Mammary epithelial cell (primary cell): ENCODE measurements at regions of chr9 and their contacts with region 1.

Region 1: GRCh38 chr9:121326130-121326838 is 43.8 kb downstream of the STOM start:
- DNase-seq: peak; percentile 23
- H3K4me3 ChIP-seq: no peak overlapping the region
- H3K27ac ChIP-seq: no peak overlapping the region
- H3K4me1 ChIP-seq: peaks cover 27% of the 10 kb centered on the region
- H3K27me3 ChIP-seq: no peaks in the 10 kb centered on the region
- CTCF ChIP-seq: no peak

Region 2: GRCh38 chr9:120730661-120731514 is 595.4 kb before region 1 on chr9:
- CTCF ChIA-PET with region 1: no interaction called
- dilution Hi-C with region 1: no loop called
- in situ Hi-C with region 1: no loop called
- intact Hi-C with region 1: no loop called
- DNase-seq: peak; percentile 66
- H3K4me3 ChIP-seq: no peak overlapping the region
- H3K27ac ChIP-seq: no peak overlapping the region
- H3K4me1 ChIP-seq: no peaks in the 10 kb centered on the region
- H3K27me3 ChIP-seq: no peaks in the 10 kb centered on the region
- CTCF ChIP-seq: no peak

Region 3: GRCh38 chr9:121350993-121351561 is 24.8 kb after region 1 on chr9:
- CTCF ChIA-PET with region 1: no interaction called
- dilution Hi-C with region 1: no loop called
- in situ Hi-C with region 1: no loop called
- intact Hi-C with region 1: loop called (anchors 1 kb)
- DNase-seq: peak; percentile 84
- H3K4me3 ChIP-seq: no peak overlapping the region
- H3K27ac ChIP-seq: peak overlapping the region; percentile 9
- H3K4me1 ChIP-seq: peaks cover 16% of the 10 kb centered on the region
- H3K27me3 ChIP-seq: no peaks in the 10 kb centered on the region
- CTCF ChIP-seq: no peak

Region 4: DNA sequence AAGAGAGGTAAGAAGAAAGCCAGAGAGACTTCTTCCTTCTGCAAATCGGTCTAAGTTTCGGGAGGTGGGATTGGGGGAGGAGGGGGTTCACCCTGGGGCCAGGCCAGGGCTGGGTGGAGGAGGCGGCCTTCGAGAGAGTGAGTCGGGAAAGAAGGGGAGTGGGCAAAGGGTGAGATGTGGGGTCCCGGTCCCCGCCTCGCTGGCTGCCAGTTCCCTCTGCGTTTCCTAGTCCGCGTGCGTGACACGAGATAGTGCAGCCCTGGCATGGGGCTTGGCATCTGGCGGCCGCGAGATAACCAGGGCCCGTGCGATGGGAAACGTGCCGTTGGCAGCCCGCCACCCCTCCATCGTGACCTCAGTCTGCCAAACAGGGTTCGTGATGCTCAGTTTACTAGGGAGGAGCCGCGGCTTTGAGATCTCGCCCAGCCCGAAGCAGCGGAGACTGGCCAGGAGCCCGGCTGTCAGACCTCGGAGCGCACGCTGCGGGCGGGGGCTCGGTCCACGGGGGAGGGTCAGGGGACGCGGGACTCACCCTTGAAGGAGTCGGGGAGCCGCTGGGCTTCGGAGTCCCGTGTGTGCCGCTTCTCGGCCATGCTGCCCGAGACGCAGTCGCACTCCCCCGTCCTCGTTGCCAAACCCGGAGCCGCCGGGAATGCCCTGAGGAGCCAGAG is 43.4 kb after region 1 on chr9 and contains the start of gene STOM:
- CTCF ChIA-PET with region 1: no interaction called
- dilution Hi-C with region 1: no loop called
- in situ Hi-C with region 1: loop called in 1 of 2 experiments (anchors 10 kb)
- intact Hi-C with region 1: loop called (anchors 1 kb)
- DNase-seq: peak; percentile 76
- H3K4me3 ChIP-seq: peak within 1 kb of the TSS; percentile 38 to 73 (median 62)
- H3K27ac ChIP-seq: peak within 1 kb of the TSS; percentile 35
- H3K4me1 ChIP-seq: peaks cover 33% of the 10 kb centered on the region
- H3K27me3 ChIP-seq: no peaks in the 10 kb centered on the region
- CTCF ChIP-seq: no peak
- total RNA-seq, gene STOM: 80.3 to 124 TPM

Region 5: GRCh38 chr9:121376214-121376830 is 50.0 kb after region 1 on chr9:
- CTCF ChIA-PET with region 1: no interaction called
- dilution Hi-C with region 1: no loop called
- in situ Hi-C with region 1: loop called in 1 of 2 experiments (anchors 10 kb)
- intact Hi-C with region 1: loop called (anchors 1 kb)
- DNase-seq: no peak
- H3K4me3 ChIP-seq: no peak overlapping the region
- H3K27ac ChIP-seq: no peak overlapping the region
- H3K4me1 ChIP-seq: peaks cover 39% of the 10 kb centered on the region
- H3K27me3 ChIP-seq: no peaks in the 10 kb centered on the region
- CTCF ChIP-seq: peak; percentile 12 to 51